ENCODE measurements at regions of chr22 and their contacts with region 1.

Region 1: DNA sequence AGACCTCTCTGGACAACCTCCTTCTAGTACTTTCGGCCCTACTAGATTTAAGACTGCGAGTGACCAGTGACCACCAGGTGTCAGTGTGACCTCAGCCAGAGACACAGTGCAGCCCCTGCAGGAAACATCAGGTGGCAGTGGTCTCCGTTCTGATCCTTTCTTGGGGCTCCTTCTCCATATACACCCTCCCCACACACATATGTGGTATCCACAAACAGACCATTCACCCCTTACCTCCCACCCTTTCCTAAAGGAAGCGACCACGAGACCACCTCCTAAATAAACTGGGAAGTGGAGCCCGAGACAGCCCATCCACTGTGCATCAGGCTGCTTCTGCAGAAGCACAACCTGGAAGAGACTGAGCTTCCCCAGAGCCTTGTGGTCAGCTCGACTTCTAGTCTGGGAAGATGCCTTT is 38.5 kb upstream of the CYP2D6 start:
- DNase-seq: no peak
- H3K4me3 ChIP-seq: no peak overlapping the region
- CTCF ChIP-seq: peak; percentile 94

Region 2: DNA sequence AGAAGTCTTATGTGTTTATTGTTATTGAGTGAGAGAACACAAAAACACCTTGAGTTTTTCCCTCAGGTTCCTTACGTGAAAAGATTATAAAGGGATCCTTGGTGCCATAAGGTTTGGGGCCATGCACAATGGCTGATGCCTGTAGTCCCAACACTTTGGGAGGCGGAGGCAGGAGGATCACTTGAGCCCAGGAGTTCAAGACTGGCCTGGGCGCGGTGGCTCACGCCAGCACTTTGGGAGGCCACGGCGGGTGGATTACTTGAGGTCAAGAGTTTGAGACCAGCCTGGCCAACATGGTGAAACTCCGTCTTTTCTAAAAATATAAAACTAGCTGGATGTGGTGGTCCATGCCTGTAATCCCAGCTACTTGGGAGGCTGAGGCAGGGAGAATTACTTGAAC is 84.2 kb before region 1 on chr22:
- CTCF ChIA-PET with region 1: no interaction called
- POLR2A ChIA-PET with region 1: no interaction called
- DNase-seq: no peak
- H3K4me3 ChIP-seq: no peak overlapping the region
- CTCF ChIP-seq: no peak

Region 3: DNA sequence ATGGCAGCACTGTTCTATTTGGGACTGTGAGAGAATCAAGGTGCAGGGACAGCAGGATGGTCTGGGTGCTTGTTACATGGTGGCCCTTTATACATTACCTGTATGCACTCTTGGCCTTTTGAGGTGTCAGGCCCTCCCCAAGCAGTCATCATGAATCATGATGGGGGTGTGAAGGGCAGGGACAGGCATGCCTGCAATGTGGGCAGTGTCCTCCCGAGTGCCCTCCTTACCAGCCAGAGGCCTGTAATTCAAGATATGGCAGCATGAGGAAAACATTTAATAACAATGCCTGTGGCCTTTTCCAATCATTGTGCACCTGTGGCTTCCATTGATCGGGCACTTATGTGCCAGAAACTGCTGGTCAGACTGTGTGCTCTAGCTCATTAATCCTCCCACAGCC is 12.9 kb before region 1 on chr22:
- CTCF ChIA-PET with region 1: interaction called, 11 read pairs
- POLR2A ChIA-PET with region 1: no interaction called
- DNase-seq: no peak
- H3K4me3 ChIP-seq: no peak overlapping the region
- CTCF ChIP-seq: no peak

Region 4: DNA sequence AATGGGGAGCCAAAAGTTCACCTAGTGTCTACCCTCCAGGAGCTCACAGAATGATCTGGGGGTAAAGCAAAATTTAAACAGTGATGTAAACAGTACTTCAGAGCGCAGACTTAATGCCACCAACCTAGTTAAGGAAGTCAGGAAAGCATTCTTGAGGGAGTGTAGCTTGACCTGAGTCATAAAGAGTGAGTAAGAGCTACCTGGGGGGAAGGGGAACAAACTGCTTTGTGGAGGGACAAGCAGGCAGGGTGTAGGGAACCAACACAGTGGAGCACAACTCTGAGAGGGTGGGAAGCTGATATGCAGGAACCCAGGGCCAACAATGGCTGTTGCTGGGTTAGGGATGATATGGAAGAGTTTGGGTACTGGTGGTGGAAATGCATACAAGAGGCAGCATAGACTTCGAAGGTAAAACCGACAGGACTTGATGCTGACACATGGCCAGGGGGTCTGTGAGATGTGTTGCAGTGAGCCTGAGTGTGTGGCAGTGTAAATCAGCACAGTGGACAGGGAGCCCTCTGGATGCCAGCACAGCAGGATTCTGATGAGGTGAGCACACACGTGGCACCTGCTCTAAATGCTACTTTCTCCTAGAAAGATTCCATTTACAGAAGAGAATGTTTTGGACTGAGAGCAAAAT is 19.9 kb after region 1 on chr22:
- CTCF ChIA-PET with region 1: no interaction called
- POLR2A ChIA-PET with region 1: no interaction called
- DNase-seq: no peak
- H3K4me3 ChIP-seq: no peak overlapping the region
- CTCF ChIP-seq: no peak

Measured in AG04449 (cell line).